Tibial artery (tissue), 4 donors: ENCODE measurements at regions of chr6 and their contacts with region 1.

Region 1: DNA sequence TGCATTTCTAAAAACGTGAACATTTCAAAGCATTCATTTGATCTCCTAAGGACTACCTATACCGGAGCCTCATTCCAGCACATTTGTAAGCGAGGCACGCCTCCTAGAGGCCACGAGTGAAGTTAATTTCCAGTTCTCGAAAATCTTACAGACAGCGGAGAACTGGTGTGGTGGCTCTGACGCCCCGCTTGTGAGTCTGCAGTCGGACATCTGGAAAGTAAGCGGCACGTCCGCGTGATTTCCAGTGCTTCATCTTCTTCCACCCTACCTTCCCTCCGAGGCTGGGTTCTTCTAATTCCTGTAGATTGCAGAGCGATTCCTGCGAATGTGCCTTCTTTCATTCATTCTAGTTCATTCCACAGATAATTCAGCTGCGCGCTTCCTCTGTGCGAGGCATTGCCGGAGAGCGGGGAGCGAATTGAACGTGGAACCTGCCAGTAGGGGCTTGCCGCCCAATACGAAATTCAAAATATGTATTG is 810 bp upstream of the PRIM2 start:
- DNase-seq: peak; percentile 82 to 86
- H3K4me3 ChIP-seq: peak overlapping the region; percentile 61 to 67
- H3K27ac ChIP-seq: peak overlapping the region; percentile 35 to 66
- H3K4me1 ChIP-seq: peaks cover 0 to 38% (median 13%) of the 10 kb centered on the region in 4 donors
- H3K27me3 ChIP-seq: no peaks in the 10 kb centered on the region
- CTCF ChIP-seq: peak; percentile 78 to 80

Region 2: GRCh38 chr6:57089687-57090460 is 226.7 kb before region 1 on chr6 and contains the start of gene ZNF451:
- intact Hi-C with region 1: loop called (anchors 5 kb)
- DNase-seq: peak; percentile 98 to 99
- H3K4me3 ChIP-seq: peak within 1 kb of the TSS; percentile 65
- H3K27ac ChIP-seq: peak within 1 kb of the TSS; percentile 80 to 83
- H3K4me1 ChIP-seq: peaks cover 0 to 36% (median 22%) of the 10 kb centered on the region in 4 donors
- H3K27me3 ChIP-seq: no peaks in the 10 kb centered on the region
- CTCF ChIP-seq: no peak

Region 3: DNA sequence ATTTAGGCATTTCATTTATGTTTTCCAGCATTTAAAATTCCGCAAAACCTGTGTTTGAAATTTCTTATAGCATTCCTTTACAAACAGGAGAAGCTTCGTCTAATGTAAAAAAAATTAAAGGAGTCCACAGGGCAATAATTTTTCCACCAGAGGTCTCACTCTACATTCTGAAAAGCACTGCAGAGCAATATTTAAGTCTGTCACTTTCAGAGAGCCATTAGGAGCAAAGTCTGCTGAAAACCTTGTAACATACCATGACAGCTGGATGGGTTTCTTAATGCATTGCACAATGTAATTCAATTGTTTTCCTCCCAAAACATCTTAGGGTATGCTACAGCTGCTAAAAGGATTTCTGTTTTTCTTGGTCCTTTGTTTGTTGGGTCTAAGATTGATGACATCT is 126.5 kb before region 1 on chr6:
- intact Hi-C with region 1: loop called (anchors 2 kb)
- DNase-seq: no peak
- H3K4me3 ChIP-seq: no peak overlapping the region
- H3K27ac ChIP-seq: no peak overlapping the region
- H3K4me1 ChIP-seq: no peaks in the 10 kb centered on the region
- H3K27me3 ChIP-seq: no peaks in the 10 kb centered on the region
- CTCF ChIP-seq: peak; percentile 44 to 54

Region 4: DNA sequence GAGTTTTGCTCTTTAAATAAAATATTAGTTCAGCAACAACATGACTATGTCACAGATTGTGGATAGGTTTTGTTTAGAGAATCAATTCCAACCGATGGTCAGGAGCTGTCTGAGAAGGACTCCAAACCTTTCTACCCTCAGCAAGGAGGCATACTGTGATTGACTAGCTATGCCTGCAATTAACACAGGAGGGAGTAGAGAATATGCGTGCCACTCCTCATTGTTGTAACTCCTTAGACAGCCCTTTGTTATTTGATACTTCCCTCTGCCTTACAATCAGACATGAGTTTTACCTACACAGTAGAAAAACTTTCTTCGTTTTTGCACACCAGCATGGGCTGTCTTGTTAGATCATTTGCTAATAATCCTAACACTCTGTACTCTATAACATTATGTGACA is 797.3 kb after region 1 on chr6:
- intact Hi-C with region 1: no loop called
- DNase-seq: no peak
- H3K4me3 ChIP-seq: no peak overlapping the region
- H3K27ac ChIP-seq: no peak overlapping the region
- H3K4me1 ChIP-seq: no peaks in the 10 kb centered on the region
- H3K27me3 ChIP-seq: no peaks in the 10 kb centered on the region
- CTCF ChIP-seq: no peak